Natural killer cell (primary cell): ENCODE measurements at regions of chr2 and their contacts with region 1.

Region 1: DNA sequence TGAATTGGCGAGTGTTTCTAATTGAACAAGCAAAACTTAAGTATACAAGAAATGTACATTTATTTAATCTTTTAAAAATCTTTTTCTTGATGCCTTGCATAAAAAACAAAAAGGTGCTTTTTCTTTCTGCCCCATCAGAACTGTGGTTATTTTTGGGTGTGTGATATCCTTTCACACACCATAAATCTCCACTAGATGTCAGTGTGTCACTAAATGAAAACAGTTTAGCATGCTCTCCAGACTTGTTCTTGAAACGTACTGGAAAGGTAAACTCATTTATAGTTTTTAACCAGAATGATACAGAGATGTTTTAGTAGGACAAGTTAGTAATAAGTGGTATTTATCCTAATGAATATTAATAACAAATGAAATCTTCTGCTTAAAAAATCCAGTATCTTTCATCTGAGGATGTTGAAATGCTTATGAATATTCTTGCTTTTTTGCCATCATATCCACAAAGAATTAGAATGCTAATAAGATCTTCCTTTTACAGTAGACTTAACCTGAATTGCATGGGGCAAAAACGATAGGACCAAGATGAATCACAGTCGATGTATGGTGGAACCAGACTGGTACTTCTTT is 96.8 kb downstream of the UBE2E3 start:
- DNase-seq: peak in 1 of 2 donors; percentile 84
- ATAC-seq: peak; percentile 83 to 93 (median 92)
- H3K4me3 ChIP-seq: no peak overlapping the region
- H3K4me3 Mint-ChIP-seq: no peak overlapping the region
- H3K27ac ChIP-seq: no peak overlapping the region
- H3K27ac Mint-ChIP-seq: peak overlapping the region in 1 of 2 donors; percentile 34
- H3K4me1 ChIP-seq: no peaks in the 10 kb centered on the region
- H3K4me1 Mint-ChIP-seq: peaks cover 3 to 7% of the 10 kb centered on the region in 2 donors
- H3K27me3 ChIP-seq: no peaks in the 10 kb centered on the region
- H3K27me3 Mint-ChIP-seq: no peaks in the 10 kb centered on the region
- CTCF ChIP-seq: peak; percentile 86

Region 2: DNA sequence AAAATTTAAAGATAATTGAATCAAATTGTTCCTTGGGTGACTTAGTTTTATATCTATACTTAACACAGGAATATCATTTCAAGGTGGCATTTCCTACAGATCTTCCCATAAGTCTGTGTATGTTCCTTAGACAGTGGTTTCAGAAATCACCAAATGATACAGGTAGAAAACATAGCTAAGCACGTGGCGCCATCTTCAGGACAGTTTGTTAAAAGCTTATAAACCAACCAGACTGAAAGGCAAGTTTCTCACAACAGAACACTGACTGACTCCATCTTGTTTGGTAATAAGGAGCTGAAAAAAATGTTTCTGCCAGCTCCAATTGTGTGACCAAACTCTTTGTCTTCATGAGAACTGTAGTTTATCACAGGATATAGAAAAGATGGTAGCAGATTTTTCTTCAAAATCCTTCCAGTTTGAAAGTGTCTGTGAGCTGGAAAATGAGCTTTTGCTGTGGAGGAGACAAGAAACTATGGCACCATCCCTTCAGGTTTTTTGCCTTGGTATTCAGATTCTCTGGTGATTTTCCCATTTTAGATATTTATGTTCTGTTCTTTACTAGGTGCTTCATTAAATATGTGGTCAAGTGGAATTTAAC is 637.9 kb after region 1 on chr2:
- intact Hi-C with region 1: loop called (anchors 1 kb)
- DNase-seq: peak; percentile 42 to 87
- ATAC-seq: peak; percentile 77 to 83 (median 82)
- H3K4me3 ChIP-seq: no peak overlapping the region
- H3K4me3 Mint-ChIP-seq: no peak overlapping the region
- H3K27ac ChIP-seq: no peak overlapping the region
- H3K27ac Mint-ChIP-seq: no peak overlapping the region
- H3K4me1 ChIP-seq: no peaks in the 10 kb centered on the region
- H3K4me1 Mint-ChIP-seq: no peaks in the 10 kb centered on the region
- H3K27me3 ChIP-seq: no peaks in the 10 kb centered on the region
- H3K27me3 Mint-ChIP-seq: peaks cover 0 to 6% of the 10 kb centered on the region in 2 donors
- CTCF ChIP-seq: peak; percentile 74

Region 3: DNA sequence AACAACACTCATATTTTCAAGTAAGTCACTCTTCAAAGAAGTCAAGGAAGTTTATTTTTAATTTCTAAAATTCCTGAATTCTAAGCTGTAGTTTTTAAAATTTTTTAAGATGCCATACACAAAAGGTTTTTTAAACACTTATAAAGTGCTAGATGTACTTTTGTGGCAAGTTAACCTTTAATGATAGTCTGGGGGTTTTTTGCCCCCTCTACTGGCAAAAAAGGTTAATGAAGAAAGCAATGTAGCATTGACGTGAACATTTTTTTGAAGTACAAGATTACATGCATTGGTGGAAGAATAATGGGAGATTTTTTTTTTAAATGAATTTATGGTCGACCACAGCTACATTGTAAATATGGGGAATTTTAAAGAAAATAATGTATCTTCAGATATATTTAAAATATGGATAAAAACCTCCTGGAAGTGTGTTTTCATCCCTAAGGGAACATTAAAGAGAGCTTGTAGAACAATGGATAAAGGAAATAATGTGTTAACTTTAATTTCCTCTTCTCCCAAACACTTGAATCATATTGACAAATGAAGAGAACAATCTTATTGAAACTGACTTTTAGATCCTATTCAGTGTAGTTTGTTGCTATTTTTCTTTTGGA is 826.9 kb after region 1 on chr2:
- intact Hi-C with region 1: loop called (anchors 2 kb)
- DNase-seq: peak in 1 of 2 donors; percentile 64
- ATAC-seq: peak in 2 of 3 donors; percentile 43 to 53
- H3K4me3 ChIP-seq: no peak overlapping the region
- H3K4me3 Mint-ChIP-seq: no peak overlapping the region
- H3K27ac ChIP-seq: no peak overlapping the region
- H3K27ac Mint-ChIP-seq: no peak overlapping the region
- H3K4me1 ChIP-seq: no peaks in the 10 kb centered on the region
- H3K4me1 Mint-ChIP-seq: peaks cover 5 to 19% of the 10 kb centered on the region in 2 donors
- H3K27me3 ChIP-seq: no peaks in the 10 kb centered on the region
- H3K27me3 Mint-ChIP-seq: no peaks in the 10 kb centered on the region
- CTCF ChIP-seq: peak; percentile 67

Region 4: DNA sequence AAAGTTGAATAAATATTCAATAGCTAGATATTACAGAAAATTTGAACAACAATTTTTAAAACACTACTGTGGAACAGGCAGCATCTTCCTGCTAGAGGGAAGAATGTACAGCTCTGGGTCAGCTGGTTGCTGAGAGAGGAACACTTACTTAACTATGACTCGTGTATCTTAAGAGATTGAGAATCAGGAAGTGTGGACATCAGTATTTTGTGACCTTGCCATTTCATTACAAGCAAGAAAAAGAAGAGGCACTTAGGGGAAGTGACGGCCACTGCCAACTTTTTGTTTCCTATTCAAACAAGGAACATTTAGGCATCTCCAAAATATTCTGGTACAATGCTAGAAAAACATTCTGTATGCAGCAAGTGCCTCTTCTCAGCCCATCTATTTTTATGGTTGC is 860.3 kb after region 1 on chr2:
- intact Hi-C with region 1: no loop called
- DNase-seq: no peak
- ATAC-seq: peak in 1 of 3 donors; percentile 64
- H3K4me3 ChIP-seq: no peak overlapping the region
- H3K4me3 Mint-ChIP-seq: no peak overlapping the region
- H3K27ac ChIP-seq: no peak overlapping the region
- H3K27ac Mint-ChIP-seq: no peak overlapping the region
- H3K4me1 ChIP-seq: no peaks in the 10 kb centered on the region
- H3K4me1 Mint-ChIP-seq: no peaks in the 10 kb centered on the region
- H3K27me3 ChIP-seq: no peaks in the 10 kb centered on the region
- H3K27me3 Mint-ChIP-seq: peaks cover 10 to 15% of the 10 kb centered on the region in 2 donors
- CTCF ChIP-seq: no peak